ENCODE measurements at regions of chr17 and their contacts with region 1.

Region 1: DNA sequence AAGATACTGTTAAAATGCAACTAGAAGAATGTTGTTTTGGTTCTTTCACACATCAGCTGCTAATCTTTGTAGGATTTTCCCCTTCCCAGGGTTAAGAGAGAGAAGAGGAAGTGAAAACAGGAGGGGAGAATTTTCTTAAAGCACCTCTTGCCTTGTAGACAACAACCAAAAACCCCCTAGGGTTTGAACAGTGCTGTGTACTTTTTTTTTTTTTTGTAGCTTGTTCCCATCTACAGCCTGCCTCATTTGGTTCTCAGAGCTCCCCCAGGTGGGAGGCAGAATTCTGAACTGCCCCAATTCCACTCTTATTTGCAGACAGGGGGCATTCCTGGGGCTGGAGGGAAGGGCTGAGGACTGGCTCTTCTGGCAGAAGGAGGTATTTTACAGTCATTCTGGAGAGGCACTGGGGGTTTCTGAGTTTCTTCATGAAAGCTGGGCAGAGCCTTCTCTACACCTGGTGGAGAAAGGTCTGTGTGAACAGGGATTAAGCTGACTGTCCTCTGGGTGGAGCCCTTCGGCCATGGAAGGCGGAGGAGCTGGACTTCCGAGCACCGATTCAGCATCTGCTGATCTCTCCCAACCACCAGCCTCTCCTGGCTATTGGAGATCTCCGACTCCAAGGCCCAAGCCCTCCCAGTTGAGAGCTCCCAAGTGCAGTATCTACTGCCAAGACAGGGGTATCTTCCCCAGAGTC is 32.2 kb downstream of the SMARCE1 start:
- DNase-seq: peak in 2 of 3 donors; percentile 56 to 70
- ATAC-seq: peak; percentile 71
- H3K4me3 ChIP-seq: no peak overlapping the region
- H3K4me1 ChIP-seq: peaks cover 28% of the 10 kb centered on the region
- CTCF ChIP-seq: no peak

Region 2: GRCh38 chr17:40791787-40792436 is 176.5 kb after region 1 on chr17:
- intact Hi-C with region 1: loop called in 1 of 2 experiments (anchors 5 kb)
- DNase-seq: peak in 1 of 3 donors; percentile 17
- ATAC-seq: no peak
- H3K4me3 ChIP-seq: no peak overlapping the region
- H3K4me1 ChIP-seq: no peaks in the 10 kb centered on the region
- CTCF ChIP-seq: no peak

Region 3: GRCh38 chr17:41301916-41302901 is 686.8 kb after region 1 on chr17 and contains the start of gene KRTAP29-1:
- intact Hi-C with region 1: no loop called
- DNase-seq: no peak
- ATAC-seq: no peak
- H3K4me3 ChIP-seq: no peak within 1 kb of the TSS
- H3K4me1 ChIP-seq: no peaks in the 10 kb centered on the region
- CTCF ChIP-seq: no peak
- total RNA-seq, gene KRTAP29-1: not detected

Measured in mucosa of descending colon (tissue), 3 donors.